ENCODE measurements at regions of chr4 and their contacts with region 1.

Region 1: GRCh38 chr4:84750253-84750959 is 167.5 kb downstream of the CDS1 start:
- DNase-seq: peak; percentile 28 to 29
- ATAC-seq: peak; percentile 77 to 78; a peak in 5 of 6 replicates
- H3K4me3 ChIP-seq: no peak overlapping the region
- H3K27ac ChIP-seq: no peak overlapping the region
- H3K4me1 ChIP-seq: no peaks in the 10 kb centered on the region
- CTCF ChIP-seq: peak; percentile 67
- EP300 ChIP-seq: no peak
- POLR2A ChIP-seq: no peak
- RAD21 ChIP-seq: peak; percentile 45 to 57

Region 2: GRCh38 chr4:84727491-84727890 is 22.9 kb before region 1 on chr4:
- CTCF ChIA-PET with region 1: no interaction called
- POLR2A ChIA-PET with region 1: no interaction called
- DNase-seq: no peak
- ATAC-seq: no peak
- H3K4me3 ChIP-seq: no peak overlapping the region
- H3K27ac ChIP-seq: no peak overlapping the region
- H3K4me1 ChIP-seq: no peaks in the 10 kb centered on the region
- CTCF ChIP-seq: no peak
- EP300 ChIP-seq: no peak
- POLR2A ChIP-seq: no peak
- RAD21 ChIP-seq: no peak

Region 3: GRCh38 chr4:84966383-84967242 is 216.2 kb after region 1 on chr4 and contains the start of gene WDFY3:
- CTCF ChIA-PET with region 1: interaction called, 33 read pairs
- POLR2A ChIA-PET with region 1: interaction called, 3 read pairs
- DNase-seq: peak; percentile 82 to 83
- ATAC-seq: peak; percentile 96
- H3K4me3 ChIP-seq: peak within 1 kb of the TSS; percentile 91
- H3K27ac ChIP-seq: peak within 1 kb of the TSS; percentile 92 to 98
- H3K4me1 ChIP-seq: peaks cover 19% of the 10 kb centered on the region; the same call in 2 of the 3 replicates
- CTCF ChIP-seq: no peak
- EP300 ChIP-seq: no peak
- POLR2A ChIP-seq: peak; percentile 71
- RAD21 ChIP-seq: no peak
- polyA plus RNA-seq, gene WDFY3: 25.1 and 32.4 TPM in 2 replicates

Measured in A549 (cell line).